Caco-2 (cell line): ENCODE measurements at regions of chr16 and their contacts with region 1.

Region 1: GRCh38 chr16:66977341-66978113 is 10.9 kb upstream of the CES4A start:
- DNase-seq: peak; percentile 89 to 95
- H3K4me3 ChIP-seq: no peak overlapping the region
- H3K4me3 Mint-ChIP-seq: no peak overlapping the region
- H3K27ac Mint-ChIP-seq: no peak overlapping the region
- H3K4me1 ChIP-seq: no peaks in the 10 kb centered on the region
- H3K4me1 Mint-ChIP-seq: no peaks in the 10 kb centered on the region
- H3K27me3 ChIP-seq: no peaks in the 10 kb centered on the region
- H3K27me3 Mint-ChIP-seq: no peaks in the 10 kb centered on the region
- CTCF ChIP-seq: peak; percentile 98 to 99

Region 2: GRCh38 chr16:66842765-66843164 is 134.8 kb before region 1 on chr16:
- CTCF ChIA-PET with region 1: no interaction called
- POLR2A ChIA-PET with region 1: no interaction called
- intact Hi-C with region 1: no loop called
- DNase-seq: no peak
- H3K4me3 ChIP-seq: no peak overlapping the region
- H3K4me3 Mint-ChIP-seq: no peak overlapping the region
- H3K27ac Mint-ChIP-seq: no peak overlapping the region
- H3K4me1 ChIP-seq: peaks cover 14% of the 10 kb centered on the region
- H3K4me1 Mint-ChIP-seq: peaks cover 15% of the 10 kb centered on the region
- H3K27me3 ChIP-seq: no peaks in the 10 kb centered on the region; the same call in 1 of the 2 replicates
- H3K27me3 Mint-ChIP-seq: peaks cover 13% of the 10 kb centered on the region
- CTCF ChIP-seq: no peak

Region 3: GRCh38 chr16:66954097-66954659 is 23.3 kb before region 1 on chr16:
- CTCF ChIA-PET with region 1: no interaction called
- POLR2A ChIA-PET with region 1: no interaction called
- intact Hi-C with region 1: loop called (anchors 1 kb)
- DNase-seq: peak; percentile 81 to 88
- H3K4me3 ChIP-seq: no peak overlapping the region
- H3K4me3 Mint-ChIP-seq: peak overlapping the region; percentile 50
- H3K27ac Mint-ChIP-seq: peak overlapping the region; percentile 72
- H3K4me1 ChIP-seq: peaks cover 17% of the 10 kb centered on the region
- H3K4me1 Mint-ChIP-seq: peaks cover 15% of the 10 kb centered on the region
- H3K27me3 ChIP-seq: no peaks in the 10 kb centered on the region
- H3K27me3 Mint-ChIP-seq: no peaks in the 10 kb centered on the region
- CTCF ChIP-seq: peak; percentile 88 to 90

Region 4: GRCh38 chr16:67024384-67025209 is 47.1 kb after region 1 on chr16:
- CTCF ChIA-PET with region 1: no interaction called
- POLR2A ChIA-PET with region 1: no interaction called
- intact Hi-C with region 1: no loop called
- DNase-seq: no peak
- H3K4me3 ChIP-seq: no peak overlapping the region
- H3K4me3 Mint-ChIP-seq: no peak overlapping the region
- H3K27ac Mint-ChIP-seq: peak overlapping the region; percentile 8
- H3K4me1 ChIP-seq: peaks cover 27% of the 10 kb centered on the region
- H3K4me1 Mint-ChIP-seq: peaks cover 40% of the 10 kb centered on the region
- H3K27me3 ChIP-seq: no peaks in the 10 kb centered on the region
- H3K27me3 Mint-ChIP-seq: no peaks in the 10 kb centered on the region
- CTCF ChIP-seq: no peak

Region 5: DNA sequence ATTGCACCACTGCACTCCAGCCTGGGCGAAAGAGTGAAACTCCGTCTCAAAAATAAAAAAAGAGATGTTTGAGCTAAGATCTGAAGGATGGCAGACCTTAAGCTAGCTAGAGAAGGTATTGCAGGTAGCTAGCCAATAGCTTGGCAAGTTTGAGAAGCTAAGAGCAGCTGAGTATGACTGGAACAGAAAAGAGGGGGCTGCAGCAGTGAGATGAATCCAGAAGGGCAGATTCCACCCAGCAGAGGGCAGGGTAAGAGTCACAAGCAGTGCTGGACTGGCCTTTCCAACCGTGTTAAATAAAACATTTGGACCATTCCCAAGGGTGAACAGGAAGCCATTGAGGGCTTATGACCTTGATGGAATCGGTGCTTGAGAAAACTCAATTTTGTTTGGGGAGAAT is 126.5 kb after region 1 on chr16:
- CTCF ChIA-PET with region 1: interaction called, 3 read pairs
- POLR2A ChIA-PET with region 1: no interaction called
- intact Hi-C with region 1: loop called (anchors 1 kb)
- DNase-seq: peak; percentile 59 to 62
- H3K4me3 ChIP-seq: no peak overlapping the region
- H3K4me3 Mint-ChIP-seq: no peak overlapping the region
- H3K27ac Mint-ChIP-seq: peak overlapping the region; percentile 15
- H3K4me1 ChIP-seq: peaks cover 7% of the 10 kb centered on the region
- H3K4me1 Mint-ChIP-seq: peaks cover 6% of the 10 kb centered on the region
- H3K27me3 ChIP-seq: no peaks in the 10 kb centered on the region
- H3K27me3 Mint-ChIP-seq: no peaks in the 10 kb centered on the region
- CTCF ChIP-seq: peak; percentile 49 to 56

Region 6: GRCh38 chr16:67109407-67110135 is 132.0 kb after region 1 on chr16 and contains the start of gene PHAF1:
- CTCF ChIA-PET with region 1: no interaction called
- POLR2A ChIA-PET with region 1: no interaction called
- intact Hi-C with region 1: loop called (anchors 2 kb)
- DNase-seq: peak; percentile 96 to 99
- H3K4me3 ChIP-seq: peak within 1 kb of the TSS; percentile 67
- H3K4me3 Mint-ChIP-seq: peak within 1 kb of the TSS; percentile 97
- H3K27ac Mint-ChIP-seq: peak within 1 kb of the TSS; percentile 93
- H3K4me1 ChIP-seq: peaks cover 42% of the 10 kb centered on the region
- H3K4me1 Mint-ChIP-seq: peaks cover 26% of the 10 kb centered on the region
- H3K27me3 ChIP-seq: no peaks in the 10 kb centered on the region
- H3K27me3 Mint-ChIP-seq: no peaks in the 10 kb centered on the region
- CTCF ChIP-seq: no peak
- total RNA-seq, gene PHAF1: 34.4 and 38.5 TPM in 2 replicates